ENCODE measurements at regions of chr16 and their contacts with region 1.

Region 1: GRCh38 chr16:10242916-10243315 is 60.7 kb upstream of the GRIN2A start:
- DNase-seq: peak; percentile 37
- ATAC-seq: no peak
- H3K4me3 ChIP-seq: no peak overlapping the region
- H3K4me3 Mint-ChIP-seq: peak overlapping the region; percentile 18
- H3K27ac ChIP-seq: no peak overlapping the region
- H3K27ac Mint-ChIP-seq: no peak overlapping the region
- H3K4me1 ChIP-seq: peaks cover 8 to 11% of the 10 kb centered on the region in 2 donors
- H3K4me1 Mint-ChIP-seq: peaks cover 8% of the 10 kb centered on the region
- H3K27me3 ChIP-seq: peaks cover 0 to 3% (median 0%) of the 10 kb centered on the region in 4 experiments
- H3K27me3 Mint-ChIP-seq: peaks cover 7% of the 10 kb centered on the region
- CTCF ChIP-seq: no peak

Region 2: GRCh38 chr16:10266809-10267208 is 23.9 kb after region 1 on chr16:
- CTCF ChIA-PET with region 1: no interaction called
- POLR2A ChIA-PET with region 1: interaction called, 12 read pairs
- intact Hi-C with region 1: no loop called
- DNase-seq: no peak
- ATAC-seq: no peak
- H3K4me3 ChIP-seq: no peak overlapping the region
- H3K4me3 Mint-ChIP-seq: peak overlapping the region; percentile 11
- H3K27ac ChIP-seq: no peak overlapping the region
- H3K27ac Mint-ChIP-seq: peak overlapping the region; percentile 7
- H3K4me1 ChIP-seq: peaks cover 4 to 5% of the 10 kb centered on the region in 2 donors
- H3K4me1 Mint-ChIP-seq: peaks cover 7% of the 10 kb centered on the region
- H3K27me3 ChIP-seq: no peaks in the 10 kb centered on the region
- H3K27me3 Mint-ChIP-seq: no peaks in the 10 kb centered on the region
- CTCF ChIP-seq: no peak

Measured in B cell (primary cell).